Caco-2 (cell line): ENCODE measurements at regions of chr2 and their contacts with region 1.

Region 1: GRCh38 chr2:27095745-27096651 is 9.4 kb downstream of the KHK start:
- DNase-seq: peak; percentile 66
- H3K4me3 ChIP-seq: peak overlapping the region; percentile 0; the same call in 1 of the 2 replicates
- H3K4me3 Mint-ChIP-seq: peak overlapping the region; percentile 64
- H3K27ac Mint-ChIP-seq: peak overlapping the region; percentile 71
- H3K4me1 ChIP-seq: peaks cover 30% of the 10 kb centered on the region
- H3K4me1 Mint-ChIP-seq: peaks cover 11% of the 10 kb centered on the region
- H3K27me3 ChIP-seq: no peaks in the 10 kb centered on the region
- H3K27me3 Mint-ChIP-seq: no peaks in the 10 kb centered on the region
- CTCF ChIP-seq: no peak

Region 2: GRCh38 chr2:26942543-26943295 is 153.3 kb before region 1 on chr2:
- CTCF ChIA-PET with region 1: no interaction called
- POLR2A ChIA-PET with region 1: no interaction called
- intact Hi-C with region 1: no loop called
- DNase-seq: peak; percentile 68 to 80
- H3K4me3 ChIP-seq: no peak overlapping the region
- H3K4me3 Mint-ChIP-seq: no peak overlapping the region
- H3K27ac Mint-ChIP-seq: no peak overlapping the region
- H3K4me1 ChIP-seq: no peaks in the 10 kb centered on the region
- H3K4me1 Mint-ChIP-seq: peaks cover 6% of the 10 kb centered on the region
- H3K27me3 ChIP-seq: no peaks in the 10 kb centered on the region
- H3K27me3 Mint-ChIP-seq: peaks cover 12% of the 10 kb centered on the region
- CTCF ChIP-seq: peak; percentile 87 to 93

Region 3: GRCh38 chr2:26982102-26982742 is 113.8 kb before region 1 on chr2:
- CTCF ChIA-PET with region 1: no interaction called
- POLR2A ChIA-PET with region 1: no interaction called
- intact Hi-C with region 1: no loop called
- DNase-seq: peak in 1 of 2 experiments; percentile 64
- H3K4me3 ChIP-seq: no peak overlapping the region
- H3K4me3 Mint-ChIP-seq: no peak overlapping the region
- H3K27ac Mint-ChIP-seq: no peak overlapping the region
- H3K4me1 ChIP-seq: 0 out of 2 replicates have a peak, but pooled peaks cover 3% of the 10 kb centered on the region
- H3K4me1 Mint-ChIP-seq: no peaks in the 10 kb centered on the region
- H3K27me3 ChIP-seq: no peaks in the 10 kb centered on the region
- H3K27me3 Mint-ChIP-seq: peaks cover 4% of the 10 kb centered on the region
- CTCF ChIP-seq: peak; percentile 42

Region 4: GRCh38 chr2:27133905-27134780 is 38.1 kb after region 1 on chr2 and contains the start of gene PREB:
- CTCF ChIA-PET with region 1: no interaction called
- POLR2A ChIA-PET with region 1: no interaction called
- intact Hi-C with region 1: loop called (anchors 2 kb)
- DNase-seq: peak; percentile 97 to 99
- H3K4me3 ChIP-seq: peak within 1 kb of the TSS; percentile 64
- H3K4me3 Mint-ChIP-seq: peak within 1 kb of the TSS; percentile 86
- H3K27ac Mint-ChIP-seq: peak within 1 kb of the TSS; percentile 93
- H3K4me1 ChIP-seq: peaks cover 5% of the 10 kb centered on the region; the same call in 1 of the 2 replicates
- H3K4me1 Mint-ChIP-seq: peaks cover 6% of the 10 kb centered on the region
- H3K27me3 ChIP-seq: no peaks in the 10 kb centered on the region
- H3K27me3 Mint-ChIP-seq: no peaks in the 10 kb centered on the region
- CTCF ChIP-seq: peak in 1 of 2 experiments; percentile 47
- total RNA-seq, gene PREB: 62.5 and 65.3 TPM in 2 replicates

Region 5: DNA sequence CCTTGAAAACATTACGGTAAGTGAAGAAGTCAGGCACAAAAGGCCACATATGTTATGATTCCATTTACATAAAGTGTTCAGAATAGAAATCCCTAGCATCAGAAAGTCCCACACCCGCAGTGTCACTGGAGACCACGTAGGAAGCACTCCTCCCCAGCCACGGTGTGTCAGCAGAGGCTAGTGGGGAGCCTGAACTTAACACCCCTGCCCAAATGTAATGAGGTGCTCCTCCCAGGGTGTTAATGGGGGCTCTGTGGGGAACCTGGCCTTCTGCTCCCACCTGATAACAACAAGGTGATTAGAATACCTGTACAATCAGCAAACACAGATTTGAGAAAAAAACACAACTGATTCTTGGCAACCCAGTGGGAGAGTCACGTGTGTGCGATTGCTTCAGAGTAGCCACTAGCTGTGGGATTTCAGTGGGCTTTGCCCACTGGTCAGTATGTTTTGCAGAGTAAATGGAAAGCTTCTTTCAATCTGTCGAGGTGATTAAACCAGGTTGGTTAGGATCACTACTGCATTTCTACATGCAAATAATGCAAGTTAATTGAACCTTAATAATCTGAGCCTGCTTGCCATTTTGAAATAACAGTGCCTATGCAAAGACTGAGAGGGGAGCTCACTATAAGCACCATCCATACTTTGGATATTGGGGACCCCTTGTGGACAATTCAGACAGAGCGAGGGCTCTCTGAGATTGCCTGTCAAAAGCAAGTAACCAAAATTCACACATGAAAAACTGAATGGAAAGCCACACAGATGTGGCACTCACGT is 95.2 kb after region 1 on chr2:
- CTCF ChIA-PET with region 1: interaction called, 43 read pairs
- POLR2A ChIA-PET with region 1: interaction called, 3 read pairs
- intact Hi-C with region 1: loop called (anchors 1 kb)
- DNase-seq: peak; percentile 73 to 82
- H3K4me3 ChIP-seq: no peak overlapping the region
- H3K4me3 Mint-ChIP-seq: no peak overlapping the region
- H3K27ac Mint-ChIP-seq: no peak overlapping the region
- H3K4me1 ChIP-seq: no peaks in the 10 kb centered on the region
- H3K4me1 Mint-ChIP-seq: no peaks in the 10 kb centered on the region
- H3K27me3 ChIP-seq: no peaks in the 10 kb centered on the region
- H3K27me3 Mint-ChIP-seq: no peaks in the 10 kb centered on the region
- CTCF ChIP-seq: peak; percentile 73 to 88

Region 6: GRCh38 chr2:27211829-27212627 is 116.0 kb after region 1 on chr2 and contains the starts of genes ATRAID and SLC5A6:
- CTCF ChIA-PET with region 1: no interaction called
- POLR2A ChIA-PET with region 1: no interaction called
- intact Hi-C with region 1: loop called (anchors 5 kb)
- DNase-seq: peak; percentile 92 to 96
- H3K4me3 ChIP-seq: peak within 1 kb of the TSS; percentile 58
- H3K4me3 Mint-ChIP-seq: peak within 1 kb of the TSS; percentile 98
- H3K27ac Mint-ChIP-seq: peak within 1 kb of the TSS; percentile 100
- H3K4me1 ChIP-seq: peaks cover 30% of the 10 kb centered on the region
- H3K4me1 Mint-ChIP-seq: peaks cover 29% of the 10 kb centered on the region
- H3K27me3 ChIP-seq: no peaks in the 10 kb centered on the region
- H3K27me3 Mint-ChIP-seq: no peaks in the 10 kb centered on the region
- CTCF ChIP-seq: no peak
- total RNA-seq, gene ATRAID: 150 and 157 TPM in 2 replicates
- total RNA-seq, gene SLC5A6: 93.7 and 98.2 TPM in 2 replicates

Region 7: GRCh38 chr2:27281855-27282559 is 186.0 kb after region 1 on chr2 and contains the start of gene TRIM54:
- CTCF ChIA-PET with region 1: interaction called, 4 read pairs
- POLR2A ChIA-PET with region 1: no interaction called
- intact Hi-C with region 1: loop called (anchors 10 kb)
- DNase-seq: no peak
- H3K4me3 ChIP-seq: no peak within 1 kb of the TSS
- H3K4me3 Mint-ChIP-seq: no peak within 1 kb of the TSS
- H3K27ac Mint-ChIP-seq: peak within 1 kb of the TSS; percentile 68
- H3K4me1 ChIP-seq: peaks cover 7% of the 10 kb centered on the region
- H3K4me1 Mint-ChIP-seq: peaks cover 16% of the 10 kb centered on the region
- H3K27me3 ChIP-seq: no peaks in the 10 kb centered on the region
- H3K27me3 Mint-ChIP-seq: no peaks in the 10 kb centered on the region
- CTCF ChIP-seq: no peak
- total RNA-seq, gene TRIM54: 0.25 TPM in 1 of 2 replicates, not detected in the other

Region 8: GRCh38 chr2:27303093-27304025 is 207.4 kb after region 1 on chr2:
- CTCF ChIA-PET with region 1: interaction called, 3 read pairs
- POLR2A ChIA-PET with region 1: no interaction called
- intact Hi-C with region 1: loop called (anchors 1 kb)
- DNase-seq: peak; percentile 67 to 70
- H3K4me3 ChIP-seq: no peak overlapping the region
- H3K4me3 Mint-ChIP-seq: peak overlapping the region; percentile 40
- H3K27ac Mint-ChIP-seq: peak overlapping the region; percentile 55
- H3K4me1 ChIP-seq: peaks cover 6% of the 10 kb centered on the region; the same call in 1 of the 2 replicates
- H3K4me1 Mint-ChIP-seq: peaks cover 12% of the 10 kb centered on the region
- H3K27me3 ChIP-seq: no peaks in the 10 kb centered on the region
- H3K27me3 Mint-ChIP-seq: peaks cover 3% of the 10 kb centered on the region
- CTCF ChIP-seq: peak; percentile 90 to 92